KBM-7 (cell line): ENCODE measurements at regions of chr1 and their contacts with region 1.

Region 1: GRCh38 chr1:179081687-179082332 is at the start of gene TOR3A:
- DNase-seq: peak; percentile 93

Region 2: GRCh38 chr1:178749581-178750166 is 332.1 kb before region 1 on chr1:
- in situ Hi-C with region 1: no loop called
- DNase-seq: no peak

Region 3: DNA sequence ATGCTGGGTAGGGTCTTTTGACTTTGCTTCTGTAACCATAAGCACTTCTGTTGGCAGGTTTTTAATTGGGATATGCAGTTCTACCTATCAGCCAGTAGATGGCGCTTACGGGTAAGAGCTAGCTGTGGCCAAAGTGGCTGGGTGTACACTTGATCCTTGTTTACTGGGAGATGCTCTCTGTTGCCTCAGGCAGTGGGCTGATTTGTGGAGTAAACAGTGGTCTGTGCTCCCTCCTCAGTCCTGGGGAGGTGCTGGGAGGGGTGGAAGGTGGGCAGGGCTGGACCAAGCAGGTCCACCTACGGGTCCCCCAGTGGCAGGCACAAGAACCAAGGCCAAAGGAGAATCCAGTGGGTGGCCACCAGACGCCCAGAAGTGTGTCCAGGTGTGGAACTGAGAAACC is 313.4 kb before region 1 on chr1:
- in situ Hi-C with region 1: no loop called
- DNase-seq: peak; percentile 57

Region 4: DNA sequence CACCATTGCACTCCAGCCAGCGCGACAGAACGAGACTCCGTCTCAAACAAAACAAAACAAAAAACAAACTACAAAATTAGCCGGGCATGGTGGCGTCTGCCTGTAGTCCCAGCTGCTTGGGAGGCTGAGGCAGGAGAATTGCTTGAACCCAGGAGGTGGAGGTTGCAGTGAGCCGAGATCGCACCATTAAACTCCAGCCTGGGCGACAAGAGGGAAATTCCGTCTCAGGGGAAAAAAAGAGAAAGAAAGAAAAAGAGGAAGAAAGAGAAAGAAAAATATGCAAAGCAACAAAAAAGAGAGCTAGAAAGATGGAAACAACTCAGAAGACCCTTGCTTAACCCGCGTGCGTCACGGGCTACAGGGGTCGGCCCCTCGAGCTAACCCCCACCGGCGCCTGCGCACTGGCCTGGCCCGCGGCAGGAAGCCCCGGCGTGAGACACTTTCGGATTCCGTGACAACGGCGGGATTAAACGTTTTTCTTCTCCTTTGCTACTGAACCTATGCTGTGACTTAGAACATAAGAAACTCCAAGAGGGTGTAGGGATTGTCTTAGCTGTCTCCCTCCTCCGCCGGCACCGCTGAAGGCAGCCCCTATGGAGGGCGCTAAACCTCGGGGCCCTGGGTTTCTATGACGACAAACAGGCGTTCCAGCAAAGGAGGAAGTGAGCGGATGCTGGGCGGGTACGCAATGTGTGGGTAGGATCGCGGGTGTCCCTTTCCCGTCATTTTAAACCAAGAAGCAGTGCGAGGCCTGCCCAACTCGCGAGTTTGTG is 283.7 kb after region 1 on chr1 and contains the start of gene AXDND1:
- in situ Hi-C with region 1: loop called (anchors 25 kb)
- DNase-seq: peak; percentile 94